Left colon (tissue), 2 donors: ENCODE measurements at regions of chr3 and their contacts with region 1.

Region 1: GRCh38 chr3:157618075-157618760 is 115.0 kb upstream of the VEPH1 start:
- DNase-seq: no peak
- ATAC-seq: peak; percentile 52

Region 2: DNA sequence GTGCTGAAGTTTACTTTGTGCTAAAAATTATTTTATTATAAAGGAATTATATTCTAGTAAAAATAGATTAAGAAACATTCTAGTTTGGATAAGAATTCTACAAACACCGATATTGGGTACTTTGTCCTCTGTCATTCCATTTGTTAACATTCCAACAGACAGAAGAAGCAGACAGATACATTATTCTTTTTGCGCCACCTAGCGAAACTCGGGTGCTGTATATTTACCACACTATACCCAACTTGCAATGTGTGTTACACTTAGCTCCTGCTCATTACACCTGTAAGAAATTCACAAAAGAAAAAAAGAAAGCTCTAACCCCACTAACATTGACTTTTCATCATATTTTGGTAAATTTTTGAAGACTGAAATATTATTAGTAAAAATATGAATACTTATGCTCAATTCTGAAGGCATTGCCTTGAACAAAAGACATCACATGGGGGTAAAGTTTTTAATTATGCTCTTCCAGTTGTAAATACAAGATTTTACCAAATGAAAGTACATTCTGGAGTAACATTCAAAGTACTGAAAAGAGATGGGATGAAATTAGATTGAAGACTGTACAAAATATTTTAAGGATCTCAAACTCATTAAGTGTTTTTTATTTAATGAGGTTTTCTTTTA is 816.3 kb after region 1 on chr3:
- intact Hi-C with region 1: loop called in 1 of 2 experiments (anchors 5 kb)
- DNase-seq: peak; percentile 30 to 80
- ATAC-seq: peak; percentile 94

Region 3: DNA sequence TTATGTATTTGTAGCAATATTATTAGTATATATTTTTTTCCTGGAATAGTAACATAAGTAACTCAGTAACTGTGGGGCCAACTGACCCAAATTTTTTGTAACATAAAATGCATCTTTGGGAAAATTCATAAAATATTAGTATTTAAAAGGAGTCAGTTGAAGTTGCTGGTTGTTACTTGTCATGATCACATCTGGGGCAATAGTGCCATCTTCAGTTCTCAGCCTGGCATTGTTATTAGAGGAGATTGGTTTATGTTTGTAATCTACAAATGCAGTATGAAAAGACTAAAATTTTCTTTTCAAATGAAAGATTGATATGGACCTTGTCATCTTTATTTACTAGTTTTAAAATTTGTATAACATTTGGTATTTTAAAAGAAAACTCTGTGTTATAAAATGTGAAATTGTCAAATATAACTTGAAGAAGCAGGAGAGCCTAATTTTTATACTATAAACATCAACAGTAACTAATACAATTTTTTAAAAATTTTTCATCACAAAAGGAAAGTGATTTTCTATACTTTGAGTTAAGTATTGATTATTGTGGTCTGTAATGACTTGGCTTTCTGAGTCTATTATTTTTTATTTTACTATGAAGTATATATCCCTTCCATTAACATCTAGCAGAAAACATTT is 914.0 kb after region 1 on chr3:
- intact Hi-C with region 1: loop called in 1 of 2 experiments (anchors 5 kb)
- DNase-seq: peak in 1 of 2 donors; percentile 4
- ATAC-seq: peak; percentile 46